Prostate gland (tissue), 2 donors: ENCODE measurements at regions of chr6 and their contacts with region 1.

Region 1: GRCh38 chr6:53956068-53956711 is 155.1 kb upstream of the MLIP start:
- DNase-seq: peak; percentile 59
- H3K4me3 ChIP-seq: no peak overlapping the region
- H3K27ac ChIP-seq: no peak overlapping the region
- H3K4me1 ChIP-seq: no peaks in the 10 kb centered on the region
- H3K27me3 ChIP-seq: no peaks in the 10 kb centered on the region
- CTCF ChIP-seq: peak; percentile 57 to 84 (median 68)
- POLR2A ChIP-seq: no peak

Region 2: GRCh38 chr6:53718597-53719460 is 237.4 kb before region 1 on chr6:
- intact Hi-C with region 1: loop called (anchors 5 kb)
- DNase-seq: peak; percentile 71
- H3K4me3 ChIP-seq: no peak overlapping the region
- H3K27ac ChIP-seq: no peak overlapping the region
- H3K4me1 ChIP-seq: no peaks in the 10 kb centered on the region
- H3K27me3 ChIP-seq: no peaks in the 10 kb centered on the region
- CTCF ChIP-seq: peak; percentile 34 to 82 (median 72)
- POLR2A ChIP-seq: no peak

Region 3: DNA sequence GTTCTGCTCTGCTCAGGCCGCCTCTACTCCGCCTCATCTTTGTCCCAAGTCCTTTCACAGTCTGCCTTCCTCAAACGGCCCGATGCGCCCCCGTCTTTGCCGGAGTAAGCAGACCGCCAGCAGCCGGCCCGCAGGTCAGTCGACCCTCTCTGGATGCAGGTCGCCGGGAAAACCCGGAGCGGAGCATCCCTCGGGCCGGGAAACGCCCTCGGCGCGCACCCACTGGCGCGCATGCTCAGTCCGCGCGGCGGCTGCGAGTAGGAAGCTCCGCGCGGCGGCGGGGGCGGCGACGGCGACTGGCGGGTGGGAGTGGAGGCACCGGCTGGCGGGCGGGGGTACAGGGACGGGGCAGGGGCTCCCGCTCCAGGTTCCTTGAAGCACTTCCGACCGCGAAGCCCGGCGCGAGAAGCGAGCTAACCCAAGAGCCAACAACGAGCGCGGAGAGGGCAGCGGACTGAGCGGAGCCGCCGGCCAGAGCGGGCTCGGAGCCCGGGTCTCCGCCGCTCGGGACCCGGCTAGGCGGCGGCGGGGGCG is 161.4 kb before region 1 on chr6 and contains the start of gene LRRC1:
- intact Hi-C with region 1: loop called (anchors 1 kb)
- DNase-seq: peak; percentile 90
- H3K4me3 ChIP-seq: peak within 1 kb of the TSS; percentile 73 to 78
- H3K27ac ChIP-seq: peak within 1 kb of the TSS; percentile 81 to 83
- H3K4me1 ChIP-seq: no peaks in the 10 kb centered on the region
- H3K27me3 ChIP-seq: no peaks in the 10 kb centered on the region
- CTCF ChIP-seq: no peak
- POLR2A ChIP-seq: peak; percentile 73
- total RNA-seq, gene LRRC1: 25.0 to 25.6 TPM

Region 4: DNA sequence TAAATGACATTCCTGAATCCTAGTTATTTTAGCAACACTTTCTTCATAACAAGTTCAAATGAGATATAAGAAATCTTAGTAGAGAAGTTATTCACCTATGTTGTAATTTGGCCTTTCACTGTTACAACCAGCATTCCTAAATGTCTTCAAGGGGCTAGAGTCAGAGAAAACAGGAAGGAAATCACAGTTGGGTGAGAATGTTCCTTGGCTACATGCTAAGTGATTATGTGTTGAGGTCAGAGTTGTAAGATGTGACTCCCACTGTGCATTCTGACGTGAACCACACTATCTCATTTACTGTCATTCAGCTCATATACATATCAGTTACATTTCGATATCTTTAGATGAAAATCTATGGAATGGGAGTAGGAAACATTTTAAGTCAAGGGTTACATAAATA is 104.1 kb after region 1 on chr6:
- intact Hi-C with region 1: no loop called
- DNase-seq: no peak
- H3K4me3 ChIP-seq: no peak overlapping the region
- H3K27ac ChIP-seq: no peak overlapping the region
- H3K4me1 ChIP-seq: no peaks in the 10 kb centered on the region
- H3K27me3 ChIP-seq: no peaks in the 10 kb centered on the region
- CTCF ChIP-seq: no peak
- POLR2A ChIP-seq: no peak